Psoas muscle (tissue), 8 donors: ENCODE measurements at regions of chrX and their contacts with region 1.

Region 1: GRCh38 chrX:2854918-2855317 is 26.2 kb downstream of the GYG2 start:
- DNase-seq: no peak
- ATAC-seq: no peak
- H3K4me3 ChIP-seq: no peak overlapping the region
- H3K27ac ChIP-seq: no peak overlapping the region
- H3K4me1 ChIP-seq: no peaks in the 10 kb centered on the region
- H3K27me3 ChIP-seq: no peaks in the 10 kb centered on the region
- CTCF ChIP-seq: no peak

Region 2: GRCh38 chrX:2707334-2707760 is 147.6 kb before region 1 on chrX:
- intact Hi-C with region 1: no loop called
- DNase-seq: peak; percentile 65 to 80
- ATAC-seq: peak; percentile 36 to 72 (median 64)
- H3K4me3 ChIP-seq: no peak overlapping the region
- H3K27ac ChIP-seq: no peak overlapping the region
- H3K4me1 ChIP-seq: peaks cover 65% of the 10 kb centered on the region
- H3K27me3 ChIP-seq: no peaks in the 10 kb centered on the region
- CTCF ChIP-seq: no peak

Region 3: GRCh38 chrX:2819345-2820135 is 35.4 kb before region 1 on chrX:
- intact Hi-C with region 1: loop called in 1 of 2 experiments (anchors 1 kb)
- DNase-seq: no peak
- ATAC-seq: no peak
- H3K4me3 ChIP-seq: no peak overlapping the region
- H3K27ac ChIP-seq: no peak overlapping the region
- H3K4me1 ChIP-seq: no peaks in the 10 kb centered on the region
- H3K27me3 ChIP-seq: peaks cover 0 to 4% (median 0%) of the 10 kb centered on the region in 3 donors
- CTCF ChIP-seq: peak; percentile 34

Region 4: DNA sequence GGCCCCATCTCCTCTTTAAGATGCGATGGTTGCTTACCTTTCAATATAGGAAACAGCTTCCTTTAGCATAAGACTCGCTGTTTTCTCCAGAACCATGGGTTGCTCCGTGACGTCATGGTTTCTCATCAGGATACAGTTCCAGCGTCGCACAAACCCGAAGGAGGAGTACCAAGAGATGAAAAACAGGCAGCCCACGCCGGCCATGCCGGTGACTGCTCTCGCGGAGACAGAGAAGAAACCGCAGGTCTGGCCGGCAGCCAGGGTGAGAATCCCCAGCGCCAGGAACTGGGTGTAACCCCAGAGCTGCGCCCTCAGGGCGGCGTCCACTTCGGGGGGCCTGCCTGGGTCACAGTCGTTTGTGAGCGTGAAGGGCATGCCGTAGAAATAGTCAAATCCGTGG is 62.8 kb after region 1 on chrX:
- intact Hi-C with region 1: no loop called
- DNase-seq: peak in 1 of 2 donors; percentile 44
- ATAC-seq: no peak
- H3K4me3 ChIP-seq: no peak overlapping the region
- H3K27ac ChIP-seq: no peak overlapping the region
- H3K4me1 ChIP-seq: no peaks in the 10 kb centered on the region
- H3K27me3 ChIP-seq: no peaks in the 10 kb centered on the region
- CTCF ChIP-seq: no peak